ENCODE measurements at regions of chr1 and their contacts with region 1.

Region 1: DNA sequence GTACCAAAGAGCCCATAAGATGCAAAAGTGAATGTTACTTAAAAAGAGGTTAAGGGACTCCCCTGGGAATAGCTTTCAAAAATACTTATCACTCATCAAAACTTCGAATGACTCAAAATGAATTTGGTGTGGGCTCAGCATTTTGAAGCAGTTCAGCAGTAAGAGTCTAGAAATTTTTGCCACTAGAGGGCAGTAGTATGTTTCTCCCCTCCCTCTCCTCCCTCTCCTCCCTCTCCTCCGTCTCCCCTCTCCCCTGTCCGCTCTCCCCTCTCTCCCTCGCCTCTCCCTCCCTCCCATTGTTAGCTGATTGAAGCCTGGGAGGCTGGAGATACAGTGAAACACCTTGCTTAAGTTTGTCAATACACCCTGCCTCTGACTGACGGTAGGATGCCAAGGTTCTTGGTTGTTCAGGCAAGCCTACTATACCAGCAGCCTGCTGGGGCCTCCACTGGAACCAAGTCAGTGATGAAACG is 70.8 kb upstream of the TENT5C start:
- DNase-seq: peak; percentile 47
- ATAC-seq: peak; percentile 86
- H3K4me3 Mint-ChIP-seq: no peak overlapping the region
- H3K27ac Mint-ChIP-seq: no peak overlapping the region
- H3K4me1 Mint-ChIP-seq: peaks cover under 1% of the 10 kb centered on the region
- H3K27me3 Mint-ChIP-seq: no peaks in the 10 kb centered on the region

Region 2: DNA sequence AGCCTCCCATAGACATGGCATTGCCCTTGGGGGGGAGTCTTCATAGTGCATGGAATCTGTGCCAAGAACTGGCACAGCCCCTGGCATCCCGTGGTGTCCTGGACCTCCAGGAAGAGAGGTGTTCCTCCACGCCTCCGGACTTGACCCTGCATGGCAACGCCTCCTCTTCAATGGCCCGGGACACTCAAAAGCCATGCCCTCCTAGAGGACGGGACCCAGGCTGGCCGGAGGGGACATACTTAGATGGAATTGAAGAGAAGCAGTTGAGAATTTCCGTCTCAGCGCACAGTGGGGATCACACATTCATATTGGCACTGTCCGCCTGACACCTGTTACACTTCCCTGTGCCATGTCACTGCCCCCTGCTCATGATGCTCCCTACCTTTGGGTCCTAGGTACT is 32.4 kb after region 1 on chr1:
- CTCF ChIA-PET with region 1: interaction called, 11 read pairs
- POLR2A ChIA-PET with region 1: no interaction called
- DNase-seq: no peak
- ATAC-seq: no peak
- H3K4me3 Mint-ChIP-seq: no peak overlapping the region
- H3K27ac Mint-ChIP-seq: no peak overlapping the region
- H3K4me1 Mint-ChIP-seq: peaks cover 18% of the 10 kb centered on the region
- H3K27me3 Mint-ChIP-seq: peaks cover 6% of the 10 kb centered on the region

Region 3: DNA sequence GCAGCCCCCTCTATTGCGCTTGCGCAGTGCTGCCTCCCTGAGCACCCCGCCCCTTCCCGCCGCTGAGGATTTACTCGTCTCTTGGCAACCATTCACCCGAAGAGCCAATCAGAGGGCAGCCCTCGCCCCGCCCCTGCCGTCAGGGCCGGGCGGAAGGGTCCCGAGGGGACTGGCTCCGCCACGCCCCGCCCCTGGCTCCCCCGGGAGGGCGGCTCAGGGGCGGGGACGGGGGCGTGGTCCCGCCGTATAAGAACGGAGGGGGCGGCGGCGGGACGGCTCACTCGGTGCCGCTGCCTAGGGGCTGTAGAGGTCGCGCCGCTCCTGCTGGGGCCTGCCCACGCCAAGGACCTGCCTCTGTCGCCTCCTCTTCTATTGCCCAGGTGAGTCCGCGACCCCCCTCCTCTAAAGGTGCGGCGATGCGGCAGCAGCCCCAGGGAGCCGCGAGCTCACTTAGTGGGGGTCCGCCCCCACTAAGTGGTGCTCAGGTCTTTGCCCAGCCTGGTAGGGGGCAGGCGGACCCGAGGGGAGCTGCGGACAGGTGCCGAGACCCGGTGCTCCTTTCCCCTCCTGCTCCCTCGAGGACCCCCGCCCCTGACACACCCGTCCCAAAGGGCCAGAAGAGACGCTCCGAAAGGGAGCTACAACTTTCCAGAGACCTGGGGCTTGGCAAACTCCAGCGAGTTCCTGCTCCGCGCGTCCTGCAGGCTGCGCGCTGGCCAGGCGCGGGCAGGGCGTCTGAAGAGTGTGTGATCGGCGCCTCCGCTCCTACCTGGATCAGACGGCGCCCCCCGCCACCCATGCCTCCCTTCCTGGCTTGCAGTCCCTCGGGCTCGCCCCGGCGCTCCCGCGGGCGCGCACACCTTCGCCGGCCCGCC is 71.0 kb after region 1 on chr1 and contains the start of gene TENT5C:
- CTCF ChIA-PET with region 1: interaction called, 14 read pairs
- POLR2A ChIA-PET with region 1: interaction called, 4 read pairs
- DNase-seq: peak; percentile 99
- ATAC-seq: peak; percentile 83
- H3K4me3 Mint-ChIP-seq: peak within 1 kb of the TSS; percentile 97
- H3K27ac Mint-ChIP-seq: peak within 1 kb of the TSS; percentile 94
- H3K4me1 Mint-ChIP-seq: peaks cover 49% of the 10 kb centered on the region
- H3K27me3 Mint-ChIP-seq: peaks cover 13% of the 10 kb centered on the region
- total RNA-seq, gene TENT5C: 20.7 to 20.8 TPM

Region 4: GRCh38 chr1:117636637-117637425 is 101.8 kb after region 1 on chr1:
- CTCF ChIA-PET with region 1: interaction called, 11 read pairs
- POLR2A ChIA-PET with region 1: no interaction called
- DNase-seq: no peak
- ATAC-seq: no peak
- H3K4me3 Mint-ChIP-seq: no peak overlapping the region
- H3K27ac Mint-ChIP-seq: no peak overlapping the region
- H3K4me1 Mint-ChIP-seq: peaks cover 22% of the 10 kb centered on the region
- H3K27me3 Mint-ChIP-seq: peaks cover 24% of the 10 kb centered on the region

Region 5: DNA sequence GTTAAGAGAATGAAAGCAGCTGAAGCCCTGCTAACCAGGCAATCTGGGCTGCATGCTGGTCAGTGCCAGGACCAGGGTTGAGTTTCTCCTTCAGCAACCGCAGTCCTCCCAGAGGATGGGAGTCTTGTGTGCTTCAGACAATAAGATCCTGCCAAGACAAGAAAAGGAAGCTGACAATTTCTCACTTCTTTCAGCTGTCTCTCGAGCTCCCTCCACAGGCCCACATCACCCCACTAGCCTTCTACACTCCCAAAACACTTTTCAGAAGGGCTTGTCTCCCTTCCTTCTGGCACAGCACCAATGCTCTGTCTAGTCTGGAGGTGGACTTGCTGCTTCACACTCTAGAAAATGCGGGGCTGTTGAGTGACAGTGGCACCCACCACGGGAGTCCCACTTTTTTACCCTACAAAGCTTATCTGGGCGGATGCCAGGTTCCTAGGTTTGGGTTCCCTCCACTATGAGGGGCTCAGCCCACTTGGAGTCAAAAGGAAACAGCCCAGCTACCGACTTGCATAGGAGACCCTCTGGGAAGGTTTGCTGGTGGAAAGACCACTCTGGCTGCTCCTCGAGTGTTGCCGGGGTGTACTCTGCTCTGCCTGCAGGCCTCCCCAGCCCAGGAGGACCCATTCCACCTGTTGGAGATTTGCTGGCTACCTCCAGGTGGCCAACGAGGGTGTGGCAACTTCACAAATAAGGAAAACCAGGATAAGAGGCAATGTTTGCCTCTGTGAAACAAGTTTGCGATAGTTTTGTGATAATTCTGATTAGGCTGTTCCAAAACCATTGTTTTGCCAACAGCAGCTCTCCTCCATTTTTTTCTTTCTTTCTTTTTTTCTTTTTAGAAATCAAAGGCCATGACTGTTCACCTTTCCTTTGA is 139.7 kb after region 1 on chr1:
- CTCF ChIA-PET with region 1: interaction called, 159 read pairs
- POLR2A ChIA-PET with region 1: interaction called, 3 read pairs
- DNase-seq: peak; percentile 74
- ATAC-seq: peak; percentile 84
- H3K4me3 Mint-ChIP-seq: no peak overlapping the region
- H3K27ac Mint-ChIP-seq: no peak overlapping the region
- H3K4me1 Mint-ChIP-seq: peaks cover 20% of the 10 kb centered on the region
- H3K27me3 Mint-ChIP-seq: peaks cover 22% of the 10 kb centered on the region

Region 6: GRCh38 chr1:117710710-117711109 is 175.7 kb after region 1 on chr1:
- CTCF ChIA-PET with region 1: interaction called, 10 read pairs
- POLR2A ChIA-PET with region 1: no interaction called
- DNase-seq: no peak
- ATAC-seq: no peak
- H3K4me3 Mint-ChIP-seq: no peak overlapping the region
- H3K27ac Mint-ChIP-seq: no peak overlapping the region
- H3K4me1 Mint-ChIP-seq: no peaks in the 10 kb centered on the region
- H3K27me3 Mint-ChIP-seq: peaks cover 26% of the 10 kb centered on the region

Region 7: DNA sequence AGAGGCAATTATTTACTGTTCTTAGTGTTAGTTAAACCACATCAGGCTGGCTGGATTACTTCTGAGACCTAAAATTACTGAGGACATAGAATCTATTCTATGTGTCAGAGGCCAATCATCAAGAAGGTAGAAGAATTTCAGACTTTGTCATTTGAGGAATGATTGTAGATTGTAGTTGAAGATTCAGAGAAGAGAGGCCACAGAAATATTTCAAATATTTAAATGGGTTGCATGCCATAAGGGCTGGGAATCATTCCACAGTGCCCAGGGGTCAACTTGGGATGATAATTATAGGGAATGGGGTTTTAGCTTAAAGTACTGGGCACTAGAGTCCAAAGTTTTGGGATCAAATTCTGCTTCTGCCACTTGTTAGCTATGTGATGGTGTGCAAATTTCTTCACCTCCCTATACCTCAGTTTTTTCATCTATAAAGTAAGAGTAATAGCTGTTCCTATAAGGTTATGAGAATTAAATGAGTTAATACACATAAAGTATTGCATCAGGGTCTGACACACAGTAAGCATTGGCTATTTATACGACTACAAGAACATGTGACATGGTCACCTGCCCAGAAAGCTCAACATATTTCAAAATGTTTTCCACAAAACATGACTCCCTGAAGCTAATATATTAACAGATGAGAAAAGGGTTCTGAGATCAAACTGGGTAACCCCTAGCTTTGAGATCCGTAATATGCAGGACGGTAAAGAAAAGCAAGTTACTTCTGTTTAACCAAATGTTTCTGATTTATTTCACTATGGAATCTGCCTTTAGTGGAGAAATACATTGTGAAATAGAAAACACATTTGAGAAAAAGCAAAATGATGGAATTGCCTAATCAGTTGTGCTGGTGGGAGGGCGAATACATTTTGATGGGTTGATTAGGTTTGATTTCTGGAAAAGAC is 719.7 kb after region 1 on chr1:
- CTCF ChIA-PET with region 1: no interaction called
- POLR2A ChIA-PET with region 1: no interaction called
- DNase-seq: no peak
- ATAC-seq: no peak
- H3K4me3 Mint-ChIP-seq: no peak overlapping the region
- H3K27ac Mint-ChIP-seq: no peak overlapping the region
- H3K4me1 Mint-ChIP-seq: no peaks in the 10 kb centered on the region
- H3K27me3 Mint-ChIP-seq: no peaks in the 10 kb centered on the region